ENCODE measurements at regions of chr9 and their contacts with region 1.

Region 1: GRCh38 chr9:95510709-95511615 is 5.8 kb downstream of the PTCH1 start:
- H3K4me3 ChIP-seq: peak overlapping the region; percentile 67
- H3K27ac ChIP-seq: peak overlapping the region; percentile 99
- H3K4me1 ChIP-seq: peaks cover 9% of the 10 kb centered on the region
- CTCF ChIP-seq: no peak

Region 2: GRCh38 chr9:95313010-95313498 is 197.9 kb before region 1 on chr9:
- CTCF ChIA-PET with region 1: no interaction called
- POLR2A ChIA-PET with region 1: interaction called, 12 read pairs
- H3K4me3 ChIP-seq: peak overlapping the region; percentile 47
- H3K27ac ChIP-seq: no peak overlapping the region; the same call in 1 of the 2 replicates
- H3K4me1 ChIP-seq: peaks cover 3% of the 10 kb centered on the region
- CTCF ChIP-seq: no peak

Region 3: DNA sequence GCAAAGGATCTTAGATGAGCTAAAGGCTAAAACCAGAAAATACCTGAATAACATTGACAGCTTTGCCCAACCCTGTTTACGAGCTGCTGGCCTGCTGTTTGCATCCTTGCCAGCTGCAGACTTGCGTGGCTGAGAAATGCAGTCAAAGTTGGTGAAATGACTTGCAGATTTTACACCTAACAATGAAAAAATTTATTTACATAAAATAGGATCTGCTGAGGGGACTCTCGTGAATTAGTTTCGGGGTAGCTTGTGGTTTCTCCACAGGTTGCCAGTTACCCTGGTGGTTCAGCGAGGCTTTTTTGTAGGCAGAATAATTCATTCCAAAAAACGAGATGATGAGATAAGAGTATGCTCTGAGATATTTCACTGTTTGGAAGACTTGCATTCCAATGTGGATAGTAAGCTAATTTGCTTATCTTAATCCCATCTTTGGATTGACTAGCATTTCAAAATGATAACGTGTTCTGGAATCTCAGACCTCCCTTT is 127.7 kb before region 1 on chr9:
- CTCF ChIA-PET with region 1: no interaction called
- POLR2A ChIA-PET with region 1: interaction called, 12 read pairs
- H3K4me3 ChIP-seq: no peak overlapping the region
- H3K27ac ChIP-seq: no peak overlapping the region
- H3K4me1 ChIP-seq: peaks cover 6% of the 10 kb centered on the region
- CTCF ChIP-seq: no peak

Region 4: GRCh38 chr9:95462249-95463147 is 48.5 kb before region 1 on chr9:
- CTCF ChIA-PET with region 1: no interaction called
- POLR2A ChIA-PET with region 1: interaction called, 14 read pairs
- H3K4me3 ChIP-seq: no peak overlapping the region
- H3K27ac ChIP-seq: peak overlapping the region; percentile 74
- H3K4me1 ChIP-seq: peaks cover 21% of the 10 kb centered on the region
- CTCF ChIP-seq: no peak

Region 5: DNA sequence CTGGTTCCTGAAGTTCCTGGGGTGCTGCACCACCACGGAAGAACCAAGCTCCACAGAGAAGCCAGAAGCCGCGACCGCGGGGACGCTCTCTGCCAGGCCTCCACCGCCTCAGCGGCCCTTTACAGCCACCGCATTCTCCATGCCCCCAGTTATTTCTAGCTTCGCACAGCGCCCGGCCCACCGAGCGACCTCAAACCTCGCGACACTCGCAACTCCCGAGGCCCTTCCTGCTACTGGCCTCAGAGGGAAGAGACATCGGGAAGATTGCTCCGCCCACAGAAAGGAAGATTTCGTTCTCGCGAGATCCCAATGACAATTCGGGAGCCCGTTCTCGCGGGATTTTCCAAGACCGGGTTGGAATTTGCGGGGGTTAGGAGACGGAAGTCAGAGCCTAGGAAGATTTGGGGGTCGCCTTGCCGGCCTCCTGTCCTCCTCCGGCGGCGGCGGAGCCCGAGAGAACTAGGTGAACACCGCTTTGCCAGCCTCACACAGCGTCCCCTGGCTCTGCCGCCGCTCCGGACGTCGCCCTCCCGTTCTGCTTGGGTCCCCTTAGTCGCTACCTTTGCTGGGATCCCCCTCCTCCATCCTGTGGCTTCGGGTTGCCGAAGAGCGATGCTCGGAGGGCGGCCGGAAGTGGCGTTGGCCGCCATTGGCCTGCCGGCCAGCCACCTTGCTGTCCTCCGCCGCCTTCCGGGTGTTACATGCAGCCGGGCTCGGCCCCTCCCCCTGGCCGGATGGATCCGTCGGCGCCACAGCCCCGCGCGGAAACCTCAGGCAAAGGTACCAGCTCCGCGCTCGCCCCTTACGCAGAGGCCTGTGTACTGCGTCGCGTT is 364.6 kb after region 1 on chr9 and contains the start of gene ERCC6L2:
- CTCF ChIA-PET with region 1: no interaction called
- POLR2A ChIA-PET with region 1: interaction called, 11 read pairs
- H3K4me3 ChIP-seq: no peak within 1 kb of the TSS
- H3K27ac ChIP-seq: no peak within 1 kb of the TSS
- H3K4me1 ChIP-seq: peaks cover 5% of the 10 kb centered on the region; the same call in 1 of the 2 replicates
- CTCF ChIP-seq: 0 out of 2 replicates have a peak, but pooled peaks have one; percentile 17

Region 6: DNA sequence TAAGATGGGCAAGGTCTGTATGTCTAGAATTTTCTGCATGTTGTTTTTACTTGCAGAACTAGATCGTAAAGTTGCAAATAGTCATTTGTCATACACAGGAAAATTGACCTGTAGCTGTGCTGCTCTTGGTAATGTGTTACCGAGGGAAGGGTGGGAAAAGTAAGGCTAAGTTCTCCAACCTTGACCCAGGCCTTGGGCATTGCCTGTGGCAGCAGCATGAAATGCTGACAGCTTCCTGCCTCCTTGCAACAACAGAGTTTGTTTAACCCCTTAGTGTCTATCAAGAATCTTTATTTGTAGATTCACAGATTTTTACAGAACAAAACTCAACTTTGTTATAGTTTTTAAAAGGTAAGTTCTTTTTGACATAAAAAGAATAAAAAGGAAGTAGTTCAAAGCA is 412.8 kb after region 1 on chr9:
- CTCF ChIA-PET with region 1: no interaction called
- POLR2A ChIA-PET with region 1: no interaction called
- H3K4me3 ChIP-seq: no peak overlapping the region
- H3K27ac ChIP-seq: no peak overlapping the region
- H3K4me1 ChIP-seq: no peaks in the 10 kb centered on the region
- CTCF ChIP-seq: no peak